ENCODE measurements at regions of chr17 and their contacts with region 1.

Region 1: DNA sequence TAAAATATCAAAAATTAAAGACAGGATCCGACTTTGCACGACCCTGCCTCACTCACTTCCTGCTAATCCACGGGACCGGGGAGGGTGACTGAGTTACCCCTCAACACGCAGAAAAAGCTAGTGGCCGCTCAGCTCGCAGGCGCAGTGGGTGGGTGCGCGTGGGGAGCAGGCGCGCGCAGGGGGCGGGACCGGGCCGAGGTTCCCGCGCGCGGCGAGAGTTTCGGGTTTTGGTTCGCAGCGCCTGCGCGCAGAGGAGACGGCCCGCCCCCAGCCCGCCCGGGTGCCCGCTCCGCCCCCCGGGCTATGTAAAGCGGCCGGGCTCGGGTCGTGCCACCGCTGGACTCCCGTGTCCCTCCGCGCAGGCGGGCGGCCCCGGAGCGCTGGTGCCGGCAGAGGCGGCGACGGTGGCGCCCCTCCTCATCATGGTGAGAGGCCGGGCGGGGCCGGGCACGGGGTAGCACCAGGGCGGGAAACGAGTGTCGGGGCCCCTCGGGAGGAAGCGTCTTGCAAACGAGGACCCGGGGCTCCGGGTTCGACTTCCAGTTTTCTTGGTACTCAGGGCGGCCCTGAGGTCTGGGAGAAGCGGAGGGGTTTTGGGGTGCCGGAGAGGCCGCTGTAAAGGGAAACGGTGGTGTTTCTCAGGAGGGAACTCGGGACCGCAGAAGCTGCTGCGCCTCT is at the start of gene CNP:
- DNase-seq: peak; percentile 83
- ATAC-seq: peak; percentile 75
- H3K4me3 ChIP-seq: peak within 1 kb of the TSS; percentile 82
- H3K27ac ChIP-seq: peak within 1 kb of the TSS; percentile 74
- H3K4me1 ChIP-seq: peaks cover 27% of the 10 kb centered on the region
- H3K27me3 ChIP-seq: no peaks in the 10 kb centered on the region
- CTCF ChIP-seq: no peak
- total RNA-seq, gene CNP: 75.4 and 91.6 TPM in 2 replicates

Region 2: GRCh38 chr17:41977991-41978390 is 11.4 kb after region 1 on chr17:
- CTCF ChIA-PET with region 1: no interaction called
- POLR2A ChIA-PET with region 1: interaction called, 12 read pairs
- intact Hi-C with region 1: no loop called
- DNase-seq: peak; percentile 43
- ATAC-seq: no peak
- H3K4me3 ChIP-seq: no peak overlapping the region
- H3K27ac ChIP-seq: no peak overlapping the region
- H3K4me1 ChIP-seq: peaks cover 13% of the 10 kb centered on the region
- H3K27me3 ChIP-seq: no peaks in the 10 kb centered on the region
- CTCF ChIP-seq: no peak

Region 3: DNA sequence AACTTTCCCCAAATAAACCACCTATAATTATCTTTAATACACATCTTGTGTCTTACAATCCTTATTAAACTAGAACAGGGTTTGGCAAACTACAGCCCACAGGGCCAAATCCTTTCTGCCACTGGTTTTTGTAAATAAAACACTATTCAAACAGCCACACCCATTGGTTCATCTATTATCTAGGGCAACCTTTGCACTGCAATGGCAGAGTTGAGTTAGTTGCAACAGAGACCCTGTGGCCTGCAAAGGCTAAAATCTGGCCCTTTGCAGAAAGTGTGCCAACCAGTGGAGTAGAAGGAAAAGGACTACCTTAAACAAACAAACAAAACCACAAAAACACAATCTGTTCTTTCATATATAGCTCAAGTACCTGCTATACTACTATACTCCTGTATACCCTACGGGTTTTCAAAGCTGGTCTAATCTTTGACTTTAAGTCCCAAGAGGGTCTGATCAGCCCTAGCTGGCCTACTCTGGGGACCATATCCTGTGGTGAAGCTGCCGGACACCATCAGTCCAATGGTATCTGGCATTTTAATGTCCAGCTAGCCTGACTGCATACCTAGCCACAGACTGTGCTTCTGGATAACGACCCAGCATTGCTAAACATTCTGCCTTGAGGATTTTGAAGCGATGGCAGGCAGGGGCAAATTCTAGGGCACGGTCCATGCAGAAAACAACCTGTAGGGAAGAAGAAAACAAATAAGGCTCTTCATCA is 23.3 kb after region 1 on chr17:
- CTCF ChIA-PET with region 1: interaction called, 3 read pairs
- POLR2A ChIA-PET with region 1: interaction called, 11 read pairs
- intact Hi-C with region 1: no loop called
- DNase-seq: peak; percentile 43
- ATAC-seq: peak; percentile 64
- H3K4me3 ChIP-seq: no peak overlapping the region
- H3K27ac ChIP-seq: peak overlapping the region; percentile 29
- H3K4me1 ChIP-seq: peaks cover 13% of the 10 kb centered on the region
- H3K27me3 ChIP-seq: no peaks in the 10 kb centered on the region
- CTCF ChIP-seq: no peak

Region 4: GRCh38 chr17:42016925-42017796 is 50.6 kb after region 1 on chr17 and contains the start of gene DNAJC7:
- CTCF ChIA-PET with region 1: interaction called, 6 read pairs
- POLR2A ChIA-PET with region 1: interaction called, 4 read pairs
- intact Hi-C with region 1: loop called (anchors 1 kb)
- DNase-seq: peak; percentile 81
- ATAC-seq: peak; percentile 87
- H3K4me3 ChIP-seq: peak within 1 kb of the TSS; percentile 94
- H3K27ac ChIP-seq: peak within 1 kb of the TSS; percentile 58
- H3K4me1 ChIP-seq: peaks cover 17% of the 10 kb centered on the region
- H3K27me3 ChIP-seq: no peaks in the 10 kb centered on the region
- CTCF ChIP-seq: no peak
- total RNA-seq, gene DNAJC7: 60.1 and 76.3 TPM in 2 replicates

Region 5: DNA sequence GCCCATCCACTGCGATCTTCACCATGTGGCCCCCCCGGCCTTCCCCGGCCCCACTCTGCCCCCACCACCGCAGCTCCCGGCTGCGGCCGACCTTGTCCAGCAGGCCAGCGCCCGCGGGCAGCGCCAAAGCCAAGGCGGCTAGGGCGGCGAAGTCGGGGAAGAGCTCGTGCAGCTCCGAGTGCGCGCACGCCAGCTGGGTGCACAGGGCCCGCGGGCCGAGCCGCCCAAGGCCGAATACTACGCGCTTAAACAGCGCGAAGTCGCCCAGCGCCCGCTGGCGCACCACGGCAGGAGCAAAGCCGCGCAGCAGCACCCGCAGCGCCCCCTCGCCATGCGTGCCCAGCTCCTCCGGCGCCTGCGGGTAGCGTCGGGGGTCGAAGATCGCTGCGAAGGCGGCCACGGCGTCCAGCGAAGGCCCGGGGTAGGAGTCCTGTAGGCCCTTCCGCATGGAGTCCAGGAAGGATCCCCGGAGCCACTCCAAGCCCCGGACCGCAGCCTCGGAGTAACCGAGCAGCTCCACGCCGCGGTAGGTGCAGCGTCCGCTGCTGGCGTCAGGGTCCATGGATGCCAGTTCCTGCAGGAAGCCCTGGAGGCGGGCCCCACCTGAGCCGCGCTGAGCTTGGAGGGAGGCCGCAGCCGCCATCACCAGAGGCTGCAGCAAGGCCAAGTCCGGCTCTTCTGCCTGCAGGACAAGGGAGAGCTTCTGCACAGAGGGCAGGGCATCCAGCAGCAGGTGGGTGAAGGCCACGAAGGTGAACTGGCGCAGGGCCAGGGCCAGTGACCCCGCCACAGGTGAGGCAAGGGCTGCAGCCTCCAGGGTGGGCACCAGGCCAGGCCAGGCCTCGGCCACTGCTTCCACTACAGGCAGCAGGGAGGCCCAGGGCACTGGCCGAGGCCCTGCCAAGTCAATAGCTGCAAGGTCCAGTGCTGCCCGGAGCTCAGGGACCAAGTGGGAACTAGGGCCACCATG is 73.5 kb after region 1 on chr17:
- CTCF ChIA-PET with region 1: no interaction called
- POLR2A ChIA-PET with region 1: no interaction called
- intact Hi-C with region 1: no loop called
- DNase-seq: no peak
- ATAC-seq: no peak
- H3K4me3 ChIP-seq: no peak overlapping the region
- H3K27ac ChIP-seq: no peak overlapping the region
- H3K4me1 ChIP-seq: no peaks in the 10 kb centered on the region
- H3K27me3 ChIP-seq: no peaks in the 10 kb centered on the region
- CTCF ChIP-seq: no peak